Posterior vena cava (tissue), 2 donors: ENCODE measurements at regions of chr6 and their contacts with region 1.

Region 1: DNA sequence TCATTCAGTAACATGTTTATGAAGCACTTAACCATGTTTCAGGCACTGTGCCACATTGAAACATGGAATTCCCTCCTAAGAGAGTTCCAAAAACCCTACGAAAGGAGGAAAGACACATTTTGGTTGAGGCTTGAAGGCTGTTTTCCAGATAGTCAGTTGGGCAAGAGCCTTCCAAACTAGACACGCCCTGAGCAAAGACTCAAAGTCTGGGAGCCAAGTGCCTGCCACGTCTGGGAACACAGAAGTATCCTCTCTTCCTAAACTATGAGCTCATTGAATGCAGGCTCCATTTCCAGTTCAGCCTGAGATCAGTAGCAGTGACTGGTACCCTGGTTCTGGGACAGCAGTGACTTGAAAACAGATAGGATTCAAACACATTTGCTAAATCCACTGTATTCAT is 74.5 kb upstream of the FAM8A1 start:
- DNase-seq: no peak

Region 2: GRCh38 chr6:16810411-16810810 is 715.2 kb before region 1 on chr6:
- intact Hi-C with region 1: loop called in 1 of 2 experiments (anchors 5 kb)
- DNase-seq: no peak

Region 3: DNA sequence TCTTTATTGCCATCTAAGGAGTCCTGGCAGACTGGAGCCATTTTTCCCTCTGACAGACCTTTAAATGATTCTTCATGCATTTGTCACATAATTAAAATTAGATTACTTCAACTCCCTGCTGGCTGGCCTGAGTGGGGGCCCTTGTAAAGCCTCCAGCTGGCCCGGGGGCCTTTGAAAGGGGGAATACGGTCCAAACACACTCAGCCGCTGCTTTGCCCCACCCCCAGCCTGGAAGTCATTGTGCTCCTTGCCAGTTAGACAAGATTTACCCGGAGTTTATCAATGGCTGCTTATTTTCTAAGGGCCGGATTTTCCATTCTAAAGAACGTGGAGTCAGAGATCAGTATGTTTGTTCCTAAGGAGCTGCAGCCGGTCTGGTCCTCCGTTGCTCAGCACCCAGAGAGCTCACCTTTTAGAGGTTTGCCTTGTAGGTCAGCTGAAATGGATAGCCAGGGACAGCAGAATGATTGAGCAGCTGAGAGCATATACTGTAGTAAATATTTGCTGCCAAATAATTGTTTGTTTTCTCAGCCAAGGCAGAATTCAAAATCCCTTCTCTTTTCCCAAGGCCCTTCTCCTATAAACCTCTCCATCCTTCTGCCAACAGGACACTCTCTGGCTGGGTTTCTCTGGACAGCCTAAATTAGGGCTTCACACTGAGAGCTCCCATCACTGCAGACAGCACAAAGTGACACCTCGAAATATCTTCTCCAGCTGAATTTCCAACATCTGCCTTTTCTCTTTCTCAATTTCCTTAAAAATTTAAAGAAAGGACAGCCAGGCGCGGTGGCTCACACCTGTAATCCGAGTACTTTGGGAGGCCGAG is 312.9 kb before region 1 on chr6:
- intact Hi-C with region 1: no loop called
- DNase-seq: peak; percentile 87

Region 4: DNA sequence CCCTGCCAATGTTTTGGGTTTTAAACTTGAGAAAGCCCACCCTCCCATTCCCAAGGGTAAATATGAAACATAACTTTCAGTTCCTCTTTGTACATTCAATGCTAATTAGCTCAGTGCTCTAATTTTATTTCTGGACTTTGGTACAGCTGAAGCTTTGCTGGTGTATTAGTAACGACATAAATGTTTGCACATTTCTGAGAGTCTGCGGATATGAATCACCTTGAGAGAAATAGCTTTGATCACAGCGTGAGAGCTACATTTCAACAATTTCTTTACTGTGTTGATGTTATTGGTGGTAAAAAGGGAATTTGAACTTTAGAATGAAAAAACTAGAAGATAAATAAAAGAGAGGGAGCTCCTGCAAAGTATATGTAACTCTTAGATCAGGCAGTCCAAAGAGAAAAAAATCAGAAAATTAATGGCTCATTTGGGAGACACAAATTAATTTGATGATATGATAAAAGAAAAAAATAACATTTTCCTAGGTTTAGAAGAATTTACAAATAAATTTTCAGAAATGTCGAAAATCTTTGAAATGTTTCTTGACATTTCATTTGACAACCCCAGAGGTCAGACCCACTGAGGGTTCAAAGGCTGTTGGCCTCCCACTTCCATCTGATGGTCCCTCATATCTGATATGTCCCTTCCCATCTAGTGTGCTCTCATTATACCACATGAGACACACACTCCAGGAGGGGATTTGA is 170.8 kb before region 1 on chr6:
- intact Hi-C with region 1: no loop called
- DNase-seq: no peak

Region 5: DNA sequence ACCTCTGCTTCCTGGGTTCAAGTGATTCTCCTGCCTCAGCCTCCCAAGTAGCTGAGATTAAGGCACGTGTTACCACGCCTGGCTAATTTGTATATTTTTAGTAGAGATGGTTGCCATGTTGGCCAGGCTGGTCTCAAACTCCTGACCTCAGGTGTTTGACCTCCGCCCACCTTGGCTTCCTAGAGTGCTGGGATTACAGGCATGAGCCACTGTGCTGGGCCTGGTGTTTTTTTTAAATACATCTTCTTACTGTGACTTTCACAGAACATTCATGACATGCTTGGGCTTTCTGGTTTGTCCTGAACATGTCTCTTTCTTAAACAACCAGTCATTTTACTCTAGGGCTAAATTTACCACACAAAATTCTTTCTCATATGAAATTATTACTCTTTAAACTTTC is 39.8 kb after region 1 on chr6:
- intact Hi-C with region 1: loop called in 1 of 2 experiments (anchors 1 kb)
- DNase-seq: no peak

Region 6: DNA sequence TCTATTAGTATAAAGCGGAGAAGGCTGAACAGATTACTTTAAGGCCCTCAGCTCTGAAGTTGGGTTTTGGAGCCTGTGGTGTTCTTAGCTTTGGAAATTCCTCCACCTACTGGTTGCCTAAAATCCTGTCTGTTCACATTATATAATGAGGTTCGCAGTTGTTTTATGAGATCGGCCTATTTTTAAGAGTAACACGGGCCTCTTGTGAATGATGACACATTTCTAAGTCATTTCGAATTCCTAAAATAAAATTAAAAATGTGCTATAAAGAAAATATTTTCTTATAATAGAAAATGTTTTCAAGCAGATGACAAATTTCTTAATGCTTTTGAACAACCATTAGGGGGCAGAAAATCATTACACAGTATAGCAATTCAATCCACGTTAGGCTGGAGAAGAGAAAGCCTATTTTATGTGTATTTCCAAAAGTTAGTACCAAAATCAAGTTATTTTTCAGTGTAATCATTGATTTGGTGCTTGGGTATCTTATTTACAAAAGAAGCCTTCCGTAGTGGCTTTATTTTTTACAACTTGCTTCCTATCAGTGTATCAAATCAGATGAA is 58.7 kb after region 1 on chr6:
- intact Hi-C with region 1: no loop called
- DNase-seq: no peak